ENCODE measurements at regions of chr12 and their contacts with region 1.

Region 1: GRCh38 chr12:31117203-31118011 is 43.7 kb downstream of the DDX11 start:
- DNase-seq: peak in 8 of 9 donors; percentile 50 to 64 (median 54)
- ATAC-seq: peak; percentile 84
- H3K4me3 ChIP-seq: peak overlapping the region; percentile 71
- H3K4me3 Mint-ChIP-seq: peak overlapping the region; percentile 65 to 88 (median 78)
- H3K27ac ChIP-seq: peak overlapping the region; percentile 14
- H3K27ac Mint-ChIP-seq: peak overlapping the region in 1 of 9 donors; percentile 51
- H3K4me1 ChIP-seq: peaks cover 12 to 18% of the 10 kb centered on the region in 2 donors
- H3K4me1 Mint-ChIP-seq: peaks cover 0 to 13% (median 9%) of the 10 kb centered on the region in 7 donors
- H3K27me3 ChIP-seq: peaks cover 0 to 7% of the 10 kb centered on the region in 2 donors
- H3K27me3 Mint-ChIP-seq: peaks cover 0 to 40% (median 6%) of the 10 kb centered on the region in 5 donors

Region 2: GRCh38 chr12:31238764-31239387 is 121.5 kb after region 1 on chr12:
- CTCF ChIA-PET with region 1: no interaction called
- POLR2A ChIA-PET with region 1: no interaction called
- intact Hi-C with region 1: loop called in 1 of 2 experiments (anchors 1 kb)
- DNase-seq: peak in 8 of 9 donors; percentile 14 to 57 (median 40)
- ATAC-seq: peak; percentile 59
- H3K4me3 ChIP-seq: no peak overlapping the region
- H3K4me3 Mint-ChIP-seq: peak overlapping the region in 3 of 10 donors; percentile 6 to 33 (median 14)
- H3K27ac ChIP-seq: no peak overlapping the region
- H3K27ac Mint-ChIP-seq: no peak overlapping the region
- H3K4me1 ChIP-seq: no peaks in the 10 kb centered on the region
- H3K4me1 Mint-ChIP-seq: peaks cover 0 to 5% (median 2%) of the 10 kb centered on the region in 7 donors
- H3K27me3 ChIP-seq: no peaks in the 10 kb centered on the region
- H3K27me3 Mint-ChIP-seq: peaks cover 6 to 32% (median 24%) of the 10 kb centered on the region in 5 donors

Region 3: GRCh38 chr12:31274520-31275300 is 157.3 kb after region 1 on chr12:
- CTCF ChIA-PET with region 1: no interaction called
- POLR2A ChIA-PET with region 1: no interaction called
- intact Hi-C with region 1: loop called in 1 of 2 experiments (anchors 2 kb)
- DNase-seq: no peak
- ATAC-seq: no peak
- H3K4me3 ChIP-seq: no peak overlapping the region
- H3K4me3 Mint-ChIP-seq: no peak overlapping the region
- H3K27ac ChIP-seq: no peak overlapping the region
- H3K27ac Mint-ChIP-seq: peak overlapping the region in 5 of 9 donors; percentile 25 to 88 (median 51)
- H3K4me1 ChIP-seq: no peaks in the 10 kb centered on the region
- H3K4me1 Mint-ChIP-seq: peaks cover 0 to 7% (median 0%) of the 10 kb centered on the region in 7 donors
- H3K27me3 ChIP-seq: no peaks in the 10 kb centered on the region
- H3K27me3 Mint-ChIP-seq: no peaks in the 10 kb centered on the region

Region 4: GRCh38 chr12:31362759-31363415 is 245.5 kb after region 1 on chr12:
- CTCF ChIA-PET with region 1: no interaction called
- POLR2A ChIA-PET with region 1: no interaction called
- intact Hi-C with region 1: loop called in 1 of 2 experiments (anchors 5 kb)
- DNase-seq: peak in 5 of 9 donors; percentile 4 to 34 (median 17)
- ATAC-seq: peak; percentile 78
- H3K4me3 ChIP-seq: peak overlapping the region; percentile 8
- H3K4me3 Mint-ChIP-seq: peak overlapping the region; percentile 50 to 81 (median 74)
- H3K27ac ChIP-seq: no peak overlapping the region
- H3K27ac Mint-ChIP-seq: peak overlapping the region; percentile 12 to 91 (median 56)
- H3K4me1 ChIP-seq: peaks cover 4 to 11% of the 10 kb centered on the region in 2 donors
- H3K4me1 Mint-ChIP-seq: peaks cover 12 to 27% (median 18%) of the 10 kb centered on the region in 7 donors
- H3K27me3 ChIP-seq: no peaks in the 10 kb centered on the region
- H3K27me3 Mint-ChIP-seq: no peaks in the 10 kb centered on the region

Region 5: GRCh38 chr12:31558521-31558920 is 441.1 kb after region 1 on chr12:
- CTCF ChIA-PET with region 1: no interaction called
- POLR2A ChIA-PET with region 1: no interaction called
- intact Hi-C with region 1: no loop called
- DNase-seq: no peak
- ATAC-seq: no peak
- H3K4me3 ChIP-seq: no peak overlapping the region
- H3K4me3 Mint-ChIP-seq: no peak overlapping the region
- H3K27ac ChIP-seq: no peak overlapping the region
- H3K27ac Mint-ChIP-seq: no peak overlapping the region
- H3K4me1 ChIP-seq: no peaks in the 10 kb centered on the region
- H3K4me1 Mint-ChIP-seq: no peaks in the 10 kb centered on the region
- H3K27me3 ChIP-seq: no peaks in the 10 kb centered on the region
- H3K27me3 Mint-ChIP-seq: peaks cover 20 to 42% (median 30%) of the 10 kb centered on the region in 5 donors

Region 6: GRCh38 chr12:31631784-31632183 is 514.4 kb after region 1 on chr12:
- CTCF ChIA-PET with region 1: no interaction called
- POLR2A ChIA-PET with region 1: no interaction called
- intact Hi-C with region 1: loop called in 1 of 2 experiments (anchors 5 kb)
- DNase-seq: no peak
- ATAC-seq: no peak
- H3K4me3 ChIP-seq: no peak overlapping the region
- H3K4me3 Mint-ChIP-seq: no peak overlapping the region
- H3K27ac ChIP-seq: no peak overlapping the region
- H3K27ac Mint-ChIP-seq: no peak overlapping the region
- H3K4me1 ChIP-seq: no peaks in the 10 kb centered on the region
- H3K4me1 Mint-ChIP-seq: peaks cover 0 to 7% (median 7%) of the 10 kb centered on the region in 7 donors
- H3K27me3 ChIP-seq: no peaks in the 10 kb centered on the region
- H3K27me3 Mint-ChIP-seq: peaks cover 0 to 7% (median 0%) of the 10 kb centered on the region in 5 donors

Measured in naive thymus-derived CD4-positive, alpha-beta T cell (primary cell).